SK-N-SH (cell line): ENCODE measurements at regions of chr2 and their contacts with region 1.

Region 1: DNA sequence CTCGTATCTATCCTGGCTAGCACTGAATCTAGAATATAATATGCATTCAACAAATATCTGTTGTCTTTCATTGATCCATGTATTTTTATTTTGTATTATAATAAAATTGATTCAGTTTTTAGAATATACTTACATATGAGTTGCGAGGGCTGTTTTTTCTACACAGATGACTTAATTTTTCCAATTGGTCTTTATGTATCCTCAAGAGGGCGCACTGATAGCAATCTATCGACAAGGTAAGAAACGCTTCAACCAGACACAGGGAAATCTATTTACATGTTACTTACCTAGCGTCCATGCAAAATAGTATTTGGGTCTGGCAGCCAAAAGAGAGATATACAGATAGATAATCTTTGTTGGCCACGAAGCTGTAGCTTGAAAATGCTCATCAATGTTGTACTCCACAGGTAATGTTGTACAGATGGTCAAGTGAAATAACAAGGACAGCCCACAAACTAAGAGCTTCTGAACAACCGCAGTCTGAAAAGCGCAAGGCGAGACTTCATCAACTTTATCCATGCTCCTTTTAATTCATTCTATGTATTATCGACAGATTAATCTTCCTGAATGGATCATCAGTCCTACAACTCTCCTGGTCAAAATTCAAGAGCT is 35.5 kb upstream of the KIDINS220 start:
- DNase-seq: peak; percentile 63
- H3K4me3 ChIP-seq: no peak overlapping the region
- H3K27ac ChIP-seq: no peak overlapping the region
- H3K4me1 ChIP-seq: no peaks in the 10 kb centered on the region
- H3K27me3 ChIP-seq: no peaks in the 10 kb centered on the region
- CTCF ChIP-seq: peak; percentile 84
- EP300 ChIP-seq: no peak
- RAD21 ChIP-seq: peak; percentile 87

Region 2: DNA sequence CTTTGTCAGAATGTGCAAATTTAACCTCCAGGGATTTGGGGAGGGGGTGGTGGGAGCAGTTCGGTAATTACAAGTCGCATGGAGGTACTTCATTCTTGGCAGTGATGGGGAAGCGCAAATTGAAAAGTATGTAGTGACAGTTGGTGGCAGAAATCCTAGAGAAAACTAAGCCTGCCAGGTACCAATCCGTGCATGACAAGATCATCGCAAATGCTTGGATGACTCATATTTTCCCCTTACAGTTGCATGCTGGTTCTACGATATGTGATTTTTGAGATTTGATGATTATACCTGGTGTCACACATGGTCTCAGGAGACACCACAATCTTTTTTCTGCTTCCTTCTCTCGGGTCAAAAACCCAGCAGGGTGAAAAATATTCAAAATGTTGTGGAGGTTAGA is 670.8 kb before region 1 on chr2:
- CTCF ChIA-PET with region 1: no interaction called
- POLR2A ChIA-PET with region 1: no interaction called
- DNase-seq: no peak
- H3K4me3 ChIP-seq: no peak overlapping the region
- H3K27ac ChIP-seq: no peak overlapping the region
- H3K4me1 ChIP-seq: peaks cover 0 to 3% of the 10 kb centered on the region in 2 experiments; a peak in 1 of 4 replicates
- H3K27me3 ChIP-seq: no peaks in the 10 kb centered on the region
- CTCF ChIP-seq: no peak
- EP300 ChIP-seq: no peak
- RAD21 ChIP-seq: no peak

Region 3: DNA sequence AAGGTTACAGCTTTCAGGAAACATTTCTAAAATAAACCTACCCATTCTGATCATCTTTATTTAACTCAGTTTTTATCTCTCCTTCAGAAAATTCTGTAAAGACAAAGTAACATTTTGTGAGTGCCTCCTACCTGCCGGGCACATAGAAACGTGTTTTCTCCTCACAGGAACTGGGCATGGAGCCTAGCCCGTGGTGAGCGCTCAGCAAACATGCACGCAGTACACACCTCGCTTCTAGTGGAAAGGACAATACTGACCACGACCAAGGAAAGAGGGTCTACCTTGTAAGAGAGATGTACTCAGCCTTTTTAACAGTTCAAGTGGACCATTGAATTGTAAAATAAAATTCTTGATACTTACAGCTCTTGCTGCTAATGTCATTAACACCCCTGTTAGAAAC is 10.7 kb before region 1 on chr2:
- CTCF ChIA-PET with region 1: interaction called, 20 read pairs
- POLR2A ChIA-PET with region 1: no interaction called
- DNase-seq: no peak
- H3K4me3 ChIP-seq: no peak overlapping the region
- H3K27ac ChIP-seq: no peak overlapping the region
- H3K4me1 ChIP-seq: no peaks in the 10 kb centered on the region; a peak in 2 of 4 replicates
- H3K27me3 ChIP-seq: no peaks in the 10 kb centered on the region
- CTCF ChIP-seq: no peak
- EP300 ChIP-seq: no peak
- RAD21 ChIP-seq: no peak

Region 4: DNA sequence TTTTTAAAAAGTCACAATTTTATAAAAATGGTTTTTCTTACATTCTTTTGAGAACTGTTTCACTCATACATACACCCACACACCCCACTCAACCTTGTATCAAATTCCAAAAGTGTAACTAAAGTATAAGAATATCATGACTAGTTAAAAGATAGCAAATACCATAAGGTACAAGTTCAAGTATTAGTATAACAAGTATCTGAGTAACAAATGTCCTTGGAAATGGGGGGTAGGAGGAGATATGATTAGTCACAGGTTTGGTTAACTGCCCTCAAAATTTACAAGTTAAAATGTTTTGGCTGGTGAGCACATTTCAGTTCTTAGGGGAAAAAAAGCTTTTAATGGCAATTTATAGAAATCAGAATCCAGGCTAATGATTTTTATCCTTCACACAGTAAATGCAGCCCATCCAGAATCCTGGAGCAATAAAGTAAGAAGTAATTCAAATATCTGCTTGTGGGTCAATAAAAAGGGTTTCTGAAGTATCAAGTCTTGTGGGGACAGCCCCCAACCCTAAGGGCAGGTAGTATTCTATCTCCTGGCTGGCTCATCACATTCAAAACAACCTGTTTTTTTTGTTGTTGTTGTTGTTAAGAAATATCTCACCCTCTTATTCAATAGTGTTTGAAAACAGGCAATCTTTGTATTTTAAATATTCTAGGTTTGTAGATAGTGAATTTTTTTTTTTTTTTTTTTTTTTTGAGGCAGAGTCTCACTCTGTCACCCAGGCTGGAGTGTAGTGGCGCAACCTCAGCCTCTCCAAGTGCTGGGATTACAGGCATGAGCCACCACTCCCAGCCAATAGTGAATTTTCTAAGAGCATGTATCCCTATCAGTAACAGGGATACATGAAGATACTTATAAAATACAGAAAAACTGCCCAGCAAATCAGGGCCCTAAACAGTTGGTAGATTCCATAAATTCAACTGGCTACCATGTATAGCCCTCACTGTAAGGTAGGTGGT is 615.9 kb after region 1 on chr2:
- CTCF ChIA-PET with region 1: no interaction called
- POLR2A ChIA-PET with region 1: no interaction called
- DNase-seq: no peak
- H3K4me3 ChIP-seq: no peak overlapping the region
- H3K27ac ChIP-seq: peak overlapping the region in 1 of 2 experiments; percentile 10; a peak in 2 of 4 replicates
- H3K4me1 ChIP-seq: no peaks in the 10 kb centered on the region; a peak in 1 of 4 replicates
- H3K27me3 ChIP-seq: no peaks in the 10 kb centered on the region
- CTCF ChIP-seq: no peak
- EP300 ChIP-seq: no peak
- RAD21 ChIP-seq: no peak